ENCODE measurements at regions of chr22 and their contacts with region 1.

Region 1: DNA sequence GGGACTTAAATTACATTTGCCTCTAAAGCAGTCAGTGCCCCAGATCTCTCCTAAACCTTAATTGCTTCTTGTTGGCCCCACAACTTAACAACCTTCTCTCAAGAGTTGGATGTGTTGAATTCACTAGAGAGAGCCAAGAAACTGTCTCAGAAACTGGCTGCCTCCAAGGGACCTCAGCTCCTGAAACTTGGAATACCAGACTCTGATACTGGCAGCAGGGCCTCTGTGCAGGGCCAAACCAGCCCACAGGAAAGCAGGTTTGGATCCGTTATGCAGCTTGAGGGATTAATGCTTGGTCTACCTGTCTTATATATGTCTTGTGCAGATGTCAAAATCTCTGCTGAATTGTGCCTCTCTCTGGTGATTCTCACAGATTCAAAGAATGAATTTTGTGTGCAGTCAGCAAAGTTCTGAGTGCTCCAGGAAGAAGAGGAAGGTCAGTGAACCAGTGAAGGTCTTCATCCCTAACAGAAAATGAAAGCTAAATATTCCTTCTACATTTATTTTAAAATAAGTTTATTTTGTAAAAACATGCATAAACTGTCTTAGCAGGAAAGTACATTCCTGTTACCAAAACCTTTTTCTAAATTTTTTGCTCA is 70.8 kb downstream of the LIF start:
- DNase-seq: no peak
- H3K4me3 ChIP-seq: no peak overlapping the region
- H3K27ac ChIP-seq: no peak overlapping the region
- H3K4me1 ChIP-seq: no peaks in the 10 kb centered on the region
- H3K27me3 ChIP-seq: no peaks in the 10 kb centered on the region
- CTCF ChIP-seq: no peak
- EP300 ChIP-seq: no peak
- POLR2A ChIP-seq: no peak

Region 2: DNA sequence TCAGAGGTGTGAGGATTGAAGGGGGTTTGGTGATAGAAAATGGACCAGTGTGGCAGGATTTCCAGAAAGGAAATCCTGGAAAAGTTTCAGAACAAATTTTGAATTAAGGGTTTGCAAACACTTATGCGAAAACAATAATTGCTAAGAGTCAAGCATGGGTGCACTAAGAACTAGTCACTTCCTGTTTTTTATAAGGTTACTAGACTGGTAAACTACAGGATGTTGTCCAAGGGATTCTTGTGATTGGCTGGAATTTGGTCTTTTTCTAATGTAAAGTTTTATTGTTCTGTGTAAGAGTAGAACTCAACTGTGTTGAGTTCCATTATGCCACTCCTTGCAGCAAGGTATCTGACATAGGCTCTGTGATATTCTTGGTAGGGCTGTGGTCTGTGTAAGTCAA is 16.6 kb after region 1 on chr22:
- in situ Hi-C with region 1: no loop called
- intact Hi-C with region 1: loop called (anchors 2 kb)
- DNase-seq: no peak
- H3K4me3 ChIP-seq: no peak overlapping the region
- H3K27ac ChIP-seq: no peak overlapping the region
- H3K4me1 ChIP-seq: peaks cover 0 to 23% (median 14%) of the 10 kb centered on the region in 4 donors
- H3K27me3 ChIP-seq: peaks cover 7% of the 10 kb centered on the region
- CTCF ChIP-seq: no peak
- EP300 ChIP-seq: no peak
- POLR2A ChIP-seq: no peak